Naive thymus-derived CD4-positive, alpha-beta T cell (primary cell): ENCODE measurements at regions of chr11 and their contacts with region 1.

Region 1: GRCh38 chr11:95699631-95700470 is 89.7 kb downstream of the FAM76B start:
- DNase-seq: peak in 7 of 9 donors; percentile 41 to 67 (median 49)
- ATAC-seq: peak; percentile 78
- H3K4me3 ChIP-seq: peak overlapping the region; percentile 36
- H3K4me3 Mint-ChIP-seq: peak overlapping the region; percentile 68 to 87 (median 76)
- H3K27ac ChIP-seq: peak overlapping the region; percentile 85
- H3K27ac Mint-ChIP-seq: peak overlapping the region in 8 of 9 donors; percentile 95 to 99 (median 96)
- H3K4me1 ChIP-seq: peaks cover 42 to 72% of the 10 kb centered on the region in 2 donors
- H3K4me1 Mint-ChIP-seq: peaks cover 32 to 65% (median 61%) of the 10 kb centered on the region in 7 donors
- H3K27me3 ChIP-seq: no peaks in the 10 kb centered on the region
- H3K27me3 Mint-ChIP-seq: no peaks in the 10 kb centered on the region

Region 2: DNA sequence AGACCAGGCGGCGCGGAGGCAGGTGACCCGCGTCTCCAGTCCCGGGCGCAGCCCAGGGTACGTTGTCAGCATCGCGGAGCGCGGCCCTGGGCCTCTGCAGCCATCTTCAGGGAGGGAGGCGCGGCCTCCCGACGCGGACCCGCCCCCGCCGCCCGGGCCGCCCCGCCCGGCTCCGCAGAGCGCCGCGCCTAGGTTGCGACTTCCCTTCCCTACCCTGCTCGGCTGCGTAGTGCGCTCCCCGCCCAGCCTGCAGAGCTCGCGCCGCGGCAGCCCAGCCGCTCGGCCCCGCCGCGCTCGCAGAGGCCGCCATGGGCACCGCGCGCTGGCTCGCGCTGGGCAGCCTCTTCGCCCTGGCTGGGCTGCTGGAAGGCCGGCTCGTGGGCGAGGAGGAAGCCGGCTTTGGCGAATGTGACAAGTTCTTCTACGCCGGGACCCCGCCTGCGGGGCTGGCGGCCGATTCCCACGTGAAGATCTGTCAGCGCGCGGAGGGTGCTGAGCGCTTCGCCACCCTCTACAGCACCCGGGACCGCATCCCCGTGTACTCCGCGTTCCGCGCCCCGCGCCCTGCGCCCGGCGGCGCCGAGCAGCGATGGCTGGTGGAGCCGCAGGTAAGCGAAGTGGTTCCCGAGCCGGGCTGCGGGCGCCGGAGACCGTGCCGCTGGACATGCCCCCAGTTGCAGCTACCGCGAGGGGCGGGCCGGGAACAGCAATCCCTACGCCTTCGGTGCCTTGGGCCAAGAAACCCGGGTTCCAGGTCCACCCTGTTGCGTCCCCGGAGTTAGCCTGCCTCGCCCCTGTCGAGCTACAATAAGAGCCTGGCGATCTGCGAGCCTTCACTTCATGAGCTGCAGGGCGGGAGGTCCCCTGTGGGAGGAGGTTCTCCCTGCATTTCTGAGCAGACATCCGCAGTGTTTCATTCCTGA is 610.0 kb before region 1 on chr11 and contains the start of gene ENDOD1:
- CTCF ChIA-PET with region 1: no interaction called
- POLR2A ChIA-PET with region 1: no interaction called
- intact Hi-C with region 1: loop called in 1 of 2 experiments (anchors 5 kb)
- DNase-seq: peak; percentile 81 to 89 (median 87)
- ATAC-seq: peak; percentile 98
- H3K4me3 ChIP-seq: peak within 1 kb of the TSS; percentile 79
- H3K4me3 Mint-ChIP-seq: peak within 1 kb of the TSS; percentile 86 to 95 (median 92)
- H3K27ac ChIP-seq: peak within 1 kb of the TSS; percentile 87
- H3K27ac Mint-ChIP-seq: peak within 1 kb of the TSS; percentile 96 to 99 (median 98)
- H3K4me1 ChIP-seq: peaks cover 16 to 31% of the 10 kb centered on the region in 2 donors
- H3K4me1 Mint-ChIP-seq: peaks cover 24 to 61% (median 49%) of the 10 kb centered on the region in 7 donors
- H3K27me3 ChIP-seq: no peaks in the 10 kb centered on the region
- H3K27me3 Mint-ChIP-seq: no peaks in the 10 kb centered on the region
- total RNA-seq, gene ENDOD1: 4.7 to 23.2 (median 8.6) TPM

Region 3: DNA sequence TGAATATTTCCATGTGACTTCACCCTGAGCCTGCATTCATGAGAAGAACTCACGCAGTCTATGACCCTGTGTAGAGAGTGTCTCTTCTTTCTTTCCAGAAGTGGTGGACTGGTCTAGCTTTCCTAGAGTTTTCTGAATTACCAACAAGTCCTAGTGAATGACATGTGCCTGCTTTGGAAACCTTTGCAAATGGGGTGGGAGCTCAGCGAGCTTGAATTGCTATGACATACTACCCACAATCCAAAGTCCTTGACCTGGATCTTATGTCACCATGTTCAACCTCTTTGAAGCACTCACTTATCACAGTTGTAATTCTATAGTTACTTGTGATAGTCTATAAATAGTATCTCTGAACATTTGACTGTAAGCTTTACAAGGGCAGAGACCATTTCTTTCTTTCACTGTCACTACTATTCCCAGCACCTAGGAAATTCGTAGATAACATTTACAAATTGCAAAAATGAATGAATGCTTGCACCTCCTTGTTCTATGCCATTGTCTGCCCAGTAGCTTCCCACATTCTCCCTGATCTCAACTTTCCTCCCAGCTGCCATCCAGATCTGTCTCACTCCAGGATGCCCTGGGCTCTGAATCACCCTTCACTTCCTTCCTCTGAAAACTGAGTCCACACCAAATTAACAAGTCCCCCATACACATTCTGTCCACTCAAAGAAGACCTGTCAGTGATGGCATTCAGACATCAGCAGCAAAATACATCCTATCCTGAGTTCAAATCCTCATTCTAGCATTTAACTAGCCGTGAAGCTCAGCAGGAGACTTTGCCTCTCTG is 266.9 kb before region 1 on chr11:
- CTCF ChIA-PET with region 1: no interaction called
- POLR2A ChIA-PET with region 1: no interaction called
- intact Hi-C with region 1: loop called in 1 of 2 experiments (anchors 5 kb)
- DNase-seq: no peak
- ATAC-seq: no peak
- H3K4me3 ChIP-seq: no peak overlapping the region
- H3K4me3 Mint-ChIP-seq: no peak overlapping the region
- H3K27ac ChIP-seq: no peak overlapping the region
- H3K27ac Mint-ChIP-seq: no peak overlapping the region
- H3K4me1 ChIP-seq: no peaks in the 10 kb centered on the region
- H3K4me1 Mint-ChIP-seq: peaks cover 6 to 27% (median 16%) of the 10 kb centered on the region in 7 donors
- H3K27me3 ChIP-seq: no peaks in the 10 kb centered on the region
- H3K27me3 Mint-ChIP-seq: peaks cover 0 to 3% (median 0%) of the 10 kb centered on the region in 5 donors

Region 4: GRCh38 chr11:95556342-95557163 is 143.3 kb before region 1 on chr11:
- CTCF ChIA-PET with region 1: no interaction called
- POLR2A ChIA-PET with region 1: no interaction called
- intact Hi-C with region 1: loop called in 1 of 2 experiments (anchors 1 kb)
- DNase-seq: peak in 1 of 9 donors; percentile 38
- ATAC-seq: no peak
- H3K4me3 ChIP-seq: no peak overlapping the region
- H3K4me3 Mint-ChIP-seq: peak overlapping the region in 1 of 10 donors; percentile 58
- H3K27ac ChIP-seq: no peak overlapping the region
- H3K27ac Mint-ChIP-seq: peak overlapping the region in 3 of 9 donors; percentile 7 to 75 (median 12)
- H3K4me1 ChIP-seq: no peaks in the 10 kb centered on the region
- H3K4me1 Mint-ChIP-seq: peaks cover 0 to 38% (median 12%) of the 10 kb centered on the region in 7 donors
- H3K27me3 ChIP-seq: no peaks in the 10 kb centered on the region
- H3K27me3 Mint-ChIP-seq: peaks cover 0 to 4% (median 0%) of the 10 kb centered on the region in 5 donors

Region 5: DNA sequence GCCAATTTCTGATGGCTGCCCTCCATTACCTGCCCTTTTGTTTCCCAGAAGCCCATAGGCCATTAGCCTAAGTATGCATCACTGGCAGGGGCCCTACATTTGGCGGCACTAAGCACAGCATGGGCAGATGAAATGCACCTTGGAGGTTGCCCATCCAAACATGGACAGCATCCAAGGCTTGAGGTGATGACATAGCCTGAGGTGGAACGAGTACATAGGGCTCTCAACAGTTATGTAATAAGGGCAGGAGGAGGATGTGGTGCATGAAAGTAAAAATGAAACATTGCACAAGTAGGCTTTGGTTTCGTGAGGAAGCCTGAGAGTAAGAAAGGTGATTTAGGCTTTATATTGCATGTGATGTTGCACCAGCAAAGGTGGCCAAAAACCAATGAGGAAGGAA is 58.4 kb before region 1 on chr11:
- CTCF ChIA-PET with region 1: interaction called, 5 read pairs
- POLR2A ChIA-PET with region 1: interaction called, 5 read pairs
- intact Hi-C with region 1: loop called (anchors 1 kb)
- DNase-seq: peak in 8 of 9 donors; percentile 31 to 73 (median 58)
- ATAC-seq: peak; percentile 85
- H3K4me3 ChIP-seq: no peak overlapping the region
- H3K4me3 Mint-ChIP-seq: peak overlapping the region in 9 of 10 donors; percentile 30 to 76 (median 71)
- H3K27ac ChIP-seq: peak overlapping the region; percentile 54
- H3K27ac Mint-ChIP-seq: peak overlapping the region; percentile 83 to 97 (median 92)
- H3K4me1 ChIP-seq: peaks cover 0 to 21% of the 10 kb centered on the region in 2 donors
- H3K4me1 Mint-ChIP-seq: peaks cover 12 to 29% (median 21%) of the 10 kb centered on the region in 7 donors
- H3K27me3 ChIP-seq: no peaks in the 10 kb centered on the region
- H3K27me3 Mint-ChIP-seq: no peaks in the 10 kb centered on the region

Region 6: DNA sequence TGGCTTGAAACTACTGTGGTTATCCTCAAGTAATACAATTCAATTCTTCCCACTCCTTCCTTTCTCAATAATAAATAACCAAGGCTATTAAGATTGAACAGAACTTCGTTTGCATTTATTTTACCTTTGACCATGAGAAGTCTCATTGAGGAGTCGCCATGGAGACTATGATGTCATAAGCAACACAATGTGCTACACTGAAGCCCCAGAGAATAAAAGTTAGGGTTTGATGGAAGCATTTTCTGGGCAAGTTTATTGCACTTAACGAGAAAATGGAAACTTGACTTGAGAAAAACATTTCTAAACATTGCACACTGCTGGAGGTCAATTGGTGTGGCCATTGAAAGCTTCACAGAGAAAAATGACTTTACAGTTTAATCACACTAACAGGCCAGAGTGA is 31.7 kb before region 1 on chr11:
- CTCF ChIA-PET with region 1: interaction called, 6 read pairs
- POLR2A ChIA-PET with region 1: interaction called, 4 read pairs
- intact Hi-C with region 1: loop called (anchors 5 kb)
- DNase-seq: no peak
- ATAC-seq: no peak
- H3K4me3 ChIP-seq: no peak overlapping the region
- H3K4me3 Mint-ChIP-seq: no peak overlapping the region
- H3K27ac ChIP-seq: no peak overlapping the region
- H3K27ac Mint-ChIP-seq: no peak overlapping the region
- H3K4me1 ChIP-seq: peaks cover 0 to 2% of the 10 kb centered on the region in 2 donors
- H3K4me1 Mint-ChIP-seq: peaks cover 0 to 13% (median 5%) of the 10 kb centered on the region in 7 donors
- H3K27me3 ChIP-seq: no peaks in the 10 kb centered on the region
- H3K27me3 Mint-ChIP-seq: no peaks in the 10 kb centered on the region

Region 7: DNA sequence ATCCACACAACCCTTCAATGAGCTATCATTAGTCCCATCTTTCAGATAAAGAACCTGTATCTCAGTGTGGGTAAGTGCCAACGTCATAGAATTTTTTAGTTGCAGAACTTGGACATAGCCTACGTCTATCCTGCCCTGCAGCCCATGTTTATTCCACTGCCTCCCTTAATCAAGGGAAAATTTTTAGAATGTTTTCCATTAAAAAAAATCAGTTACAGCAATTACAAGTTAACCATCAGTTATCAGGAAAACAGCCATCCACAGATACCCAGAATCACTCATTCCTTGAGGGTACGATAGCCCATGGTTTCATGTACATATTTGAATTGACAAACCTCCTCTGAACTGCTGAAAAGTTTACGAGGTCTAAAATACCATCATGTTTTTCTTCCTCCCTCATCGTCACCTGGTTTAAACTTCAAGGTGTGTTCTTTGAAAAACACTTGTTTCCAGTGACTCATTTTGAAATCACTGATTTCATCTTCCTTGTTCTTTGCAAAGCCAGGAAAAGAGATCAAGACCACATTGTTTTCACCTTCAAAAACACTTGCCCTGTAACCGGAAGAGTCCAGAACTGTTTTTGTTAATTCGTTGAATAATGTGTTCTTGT is 11.2 kb before region 1 on chr11:
- CTCF ChIA-PET with region 1: interaction called, 18 read pairs
- POLR2A ChIA-PET with region 1: interaction called, 44 read pairs
- intact Hi-C with region 1: loop called (anchors 1 kb)
- DNase-seq: peak in 7 of 9 donors; percentile 48 to 84 (median 70)
- ATAC-seq: peak; percentile 79
- H3K4me3 ChIP-seq: no peak overlapping the region
- H3K4me3 Mint-ChIP-seq: no peak overlapping the region
- H3K27ac ChIP-seq: peak overlapping the region; percentile 73
- H3K27ac Mint-ChIP-seq: no peak overlapping the region
- H3K4me1 ChIP-seq: peaks cover 25 to 68% of the 10 kb centered on the region in 2 donors
- H3K4me1 Mint-ChIP-seq: peaks cover 8 to 44% (median 35%) of the 10 kb centered on the region in 7 donors
- H3K27me3 ChIP-seq: no peaks in the 10 kb centered on the region
- H3K27me3 Mint-ChIP-seq: no peaks in the 10 kb centered on the region